RWPE1 (cell line): ENCODE measurements at regions of chr7 and their contacts with region 1.

Region 1: GRCh38 chr7:26160881-26161280 is 8.9 kb downstream of the NFE2L3 start:
- DNase-seq: no peak
- H3K27ac ChIP-seq: no peak overlapping the region
- CTCF ChIP-seq: no peak

Region 2: DNA sequence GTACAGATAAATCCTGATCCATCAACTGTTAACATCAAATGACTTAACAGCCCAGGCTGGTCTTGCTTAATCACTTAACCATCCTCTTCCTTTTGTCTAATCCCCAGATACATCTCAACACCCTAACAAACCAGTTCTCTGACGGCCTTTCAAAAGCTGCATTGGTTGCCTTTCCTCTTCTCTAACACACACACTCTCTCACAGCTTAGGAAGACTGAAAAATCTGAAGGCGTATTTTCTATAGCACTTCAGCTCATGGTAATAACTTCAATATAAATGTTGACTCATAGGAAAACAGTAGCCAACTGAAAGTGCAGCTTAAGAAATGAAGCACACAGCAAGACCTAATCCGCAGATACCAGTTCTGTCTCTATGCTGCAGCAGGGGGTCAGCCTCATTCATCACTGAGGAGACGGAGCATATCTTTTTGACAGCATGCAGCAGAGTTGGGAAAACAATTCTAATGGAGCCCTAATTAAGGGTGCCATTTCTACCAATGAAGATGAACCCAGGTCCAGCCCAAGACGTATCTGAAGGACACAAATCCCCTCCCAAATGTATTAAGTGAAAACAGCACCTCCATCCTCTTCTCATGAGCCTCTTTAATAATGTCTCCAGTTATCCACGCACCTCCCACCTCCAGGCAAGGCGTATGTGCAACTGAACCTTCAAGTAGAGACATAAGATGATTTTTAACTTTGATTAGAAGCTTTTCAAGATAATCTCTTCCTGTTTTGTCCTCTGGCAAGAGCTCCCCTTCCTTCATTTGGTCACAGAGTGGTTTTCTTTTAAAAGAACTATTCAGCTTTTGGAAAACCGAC is 220.6 kb before region 1 on chr7:
- CTCF ChIA-PET with region 1: no interaction called
- POLR2A ChIA-PET with region 1: interaction called, 10 read pairs
- DNase-seq: no peak
- H3K27ac ChIP-seq: peak overlapping the region; percentile 60; the same call in 1 of the 2 replicates
- CTCF ChIP-seq: no peak

Region 3: DNA sequence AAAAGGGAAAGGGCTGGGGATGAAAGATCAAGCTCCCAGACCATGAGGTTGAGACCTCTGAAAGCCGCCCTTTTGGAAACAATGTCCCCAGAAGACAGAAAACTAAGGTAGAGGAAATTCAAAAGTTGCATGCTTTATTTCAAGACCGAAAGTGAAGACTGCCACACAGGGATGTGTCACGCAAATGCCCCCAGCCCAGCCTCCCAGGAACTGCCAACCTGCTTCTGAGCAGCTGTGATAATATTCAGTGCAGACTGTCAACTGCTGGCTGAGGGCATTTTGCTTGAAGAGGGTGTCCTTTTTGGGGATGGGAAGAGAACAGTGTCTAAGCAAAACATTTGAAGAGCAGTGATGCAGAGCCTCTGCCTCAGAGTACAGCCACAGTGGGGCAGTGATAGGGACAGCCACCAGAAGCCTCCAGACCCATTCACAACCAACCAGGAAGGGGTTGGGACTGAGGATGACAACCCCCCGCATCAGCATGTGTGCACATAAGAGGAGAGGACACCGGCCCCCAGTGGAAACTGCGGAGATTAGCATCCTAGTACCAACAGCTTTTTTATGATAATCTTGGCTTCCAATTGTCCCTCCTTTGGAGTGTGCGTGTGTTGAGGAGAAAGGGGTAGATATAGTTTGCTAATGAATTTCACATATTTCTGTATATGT is 43.6 kb before region 1 on chr7:
- CTCF ChIA-PET with region 1: no interaction called
- POLR2A ChIA-PET with region 1: no interaction called
- DNase-seq: no peak
- H3K27ac ChIP-seq: no peak overlapping the region
- CTCF ChIP-seq: no peak